ENCODE measurements at regions of chr17 and their contacts with region 1.

Region 1: DNA sequence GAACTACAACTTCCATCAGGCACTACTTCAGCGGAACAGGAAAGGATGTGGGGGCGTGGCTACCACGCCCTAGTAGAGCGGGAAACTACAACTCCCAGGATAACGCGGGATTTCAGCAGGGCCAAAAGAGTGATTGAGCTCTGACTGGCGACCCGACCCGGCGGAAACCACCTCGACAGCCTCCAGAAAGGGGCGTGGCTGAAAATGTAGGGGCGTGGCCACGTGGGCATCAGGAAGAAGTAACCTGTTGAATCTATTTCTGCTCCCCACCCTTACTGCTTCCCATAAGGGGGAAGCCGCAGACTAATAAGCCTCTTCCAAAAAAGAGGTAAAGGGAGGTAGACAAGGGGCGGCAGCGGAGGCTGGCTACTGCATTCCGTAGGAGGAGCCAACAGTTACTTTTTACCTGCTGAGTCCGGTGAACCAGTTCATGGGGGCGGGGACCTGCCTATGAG is at the start of gene TMEM102:
- DNase-seq: peak; percentile 96 to 99 (median 98)
- ATAC-seq: peak; percentile 81
- H3K4me3 ChIP-seq: peak within 1 kb of the TSS; percentile 70 to 82
- H3K4me3 Mint-ChIP-seq: peak within 1 kb of the TSS; percentile 92
- H3K27ac ChIP-seq: peak within 1 kb of the TSS; percentile 66 to 90
- H3K27ac Mint-ChIP-seq: peak within 1 kb of the TSS; percentile 95
- H3K4me1 ChIP-seq: peaks cover 38% of the 10 kb centered on the region
- H3K4me1 Mint-ChIP-seq: peaks cover 38% of the 10 kb centered on the region
- H3K27me3 ChIP-seq: peaks cover 0 to 4% of the 10 kb centered on the region in 2 experiments
- H3K27me3 Mint-ChIP-seq: peaks cover 12% of the 10 kb centered on the region
- CTCF ChIP-seq: no peak
- total RNA-seq, gene TMEM102: 13.2 to 15.3 TPM

Region 2: GRCh38 chr17:7045909-7046724 is 389.1 kb before region 1 on chr17:
- CTCF ChIA-PET with region 1: no interaction called
- POLR2A ChIA-PET with region 1: interaction called, 4 read pairs
- intact Hi-C with region 1: loop called in 1 of 2 experiments (anchors 5 kb)
- DNase-seq: peak in 6 of 9 experiments; percentile 43 to 88 (median 59)
- ATAC-seq: peak; percentile 34
- H3K4me3 ChIP-seq: peak overlapping the region; percentile 42 to 58
- H3K4me3 Mint-ChIP-seq: peak overlapping the region; percentile 79
- H3K27ac ChIP-seq: peak overlapping the region; percentile 47 to 73
- H3K27ac Mint-ChIP-seq: peak overlapping the region; percentile 88
- H3K4me1 ChIP-seq: peaks cover 35% of the 10 kb centered on the region
- H3K4me1 Mint-ChIP-seq: peaks cover 36% of the 10 kb centered on the region
- H3K27me3 ChIP-seq: no peaks in the 10 kb centered on the region
- H3K27me3 Mint-ChIP-seq: no peaks in the 10 kb centered on the region
- CTCF ChIP-seq: peak; percentile 89

Region 3: DNA sequence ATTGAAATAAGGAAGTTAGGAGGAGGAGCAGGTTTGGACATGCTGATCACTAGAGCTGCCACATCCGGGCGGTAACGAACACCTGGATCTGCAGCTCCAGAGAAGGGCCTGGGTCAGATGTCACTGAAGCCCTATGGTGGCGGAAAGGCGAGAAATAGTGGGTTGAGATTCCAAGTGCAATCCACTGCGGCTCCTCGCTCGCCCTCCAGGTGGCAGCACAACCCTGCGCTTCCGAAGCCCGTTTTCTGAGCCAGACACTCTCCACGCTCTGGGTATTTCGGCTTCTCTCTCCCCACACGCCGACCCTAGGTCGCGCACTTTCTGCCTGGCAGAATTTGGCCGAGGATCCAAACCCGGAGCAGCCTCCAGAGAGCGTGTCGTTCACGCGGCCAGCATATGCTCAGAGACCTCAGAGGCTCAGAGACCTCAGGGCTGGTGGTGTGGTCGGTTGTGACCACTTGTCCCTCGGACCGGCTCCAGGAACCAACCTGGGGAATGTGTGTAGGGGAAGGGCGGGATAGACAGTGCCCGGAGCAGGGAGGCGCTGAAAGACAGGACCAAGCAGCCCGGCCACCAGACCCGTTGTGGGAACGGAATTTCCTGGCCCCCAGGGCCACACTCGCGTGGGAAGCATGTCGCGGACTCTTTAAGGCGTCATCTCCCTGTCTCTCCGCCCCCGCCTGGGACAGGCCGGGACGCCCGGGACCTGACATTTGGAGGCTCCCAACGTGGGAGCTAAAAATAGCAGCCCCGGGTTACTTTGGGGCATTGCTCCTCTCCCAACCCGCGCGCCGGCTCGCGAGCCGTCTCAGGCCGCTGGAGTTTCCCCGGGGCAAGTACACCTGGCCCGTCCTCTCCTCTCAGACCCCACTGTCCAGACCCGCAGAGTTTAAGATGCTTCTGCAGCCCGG is 154.5 kb before region 1 on chr17:
- CTCF ChIA-PET with region 1: interaction called, 6 read pairs
- POLR2A ChIA-PET with region 1: no interaction called
- intact Hi-C with region 1: loop called (anchors 1 to 2 kb)
- DNase-seq: peak; percentile 76 to 92 (median 86)
- ATAC-seq: peak; percentile 88
- H3K4me3 ChIP-seq: peak overlapping the region; percentile 41 to 46
- H3K4me3 Mint-ChIP-seq: peak overlapping the region; percentile 73
- H3K27ac ChIP-seq: no peak overlapping the region
- H3K27ac Mint-ChIP-seq: no peak overlapping the region
- H3K4me1 ChIP-seq: peaks cover 25% of the 10 kb centered on the region
- H3K4me1 Mint-ChIP-seq: peaks cover 16% of the 10 kb centered on the region
- H3K27me3 ChIP-seq: peaks cover 0 to 26% of the 10 kb centered on the region in 2 experiments
- H3K27me3 Mint-ChIP-seq: peaks cover 9% of the 10 kb centered on the region
- CTCF ChIP-seq: peak; percentile 84

Region 4: GRCh38 chr17:7383742-7384488 is 51.3 kb before region 1 on chr17:
- CTCF ChIA-PET with region 1: interaction called, 8 read pairs
- POLR2A ChIA-PET with region 1: interaction called, 19 read pairs
- intact Hi-C with region 1: loop called (anchors 1 kb)
- DNase-seq: peak; percentile 60 to 91 (median 80)
- ATAC-seq: peak; percentile 94
- H3K4me3 ChIP-seq: peak overlapping the region; percentile 66 to 75
- H3K4me3 Mint-ChIP-seq: peak overlapping the region; percentile 88
- H3K27ac ChIP-seq: peak overlapping the region; percentile 80 to 92
- H3K27ac Mint-ChIP-seq: peak overlapping the region; percentile 96
- H3K4me1 ChIP-seq: peaks cover 21% of the 10 kb centered on the region
- H3K4me1 Mint-ChIP-seq: peaks cover 8% of the 10 kb centered on the region
- H3K27me3 ChIP-seq: peaks cover 12 to 14% of the 10 kb centered on the region in 2 experiments
- H3K27me3 Mint-ChIP-seq: peaks cover 29% of the 10 kb centered on the region
- CTCF ChIP-seq: no peak

Region 5: GRCh38 chr17:7477392-7478275 is 42.4 kb after region 1 on chr17:
- CTCF ChIA-PET with region 1: interaction called, 34 read pairs
- POLR2A ChIA-PET with region 1: interaction called, 47 read pairs
- intact Hi-C with region 1: loop called in 1 of 2 experiments (anchors 1 kb)
- DNase-seq: peak in 6 of 9 experiments; percentile 30 to 85 (median 66)
- ATAC-seq: peak; percentile 46
- H3K4me3 ChIP-seq: peak overlapping the region; percentile 68 to 78
- H3K4me3 Mint-ChIP-seq: peak overlapping the region; percentile 99
- H3K27ac ChIP-seq: peak overlapping the region; percentile 67 to 91
- H3K27ac Mint-ChIP-seq: peak overlapping the region; percentile 99
- H3K4me1 ChIP-seq: peaks cover 33% of the 10 kb centered on the region
- H3K4me1 Mint-ChIP-seq: peaks cover 68% of the 10 kb centered on the region
- H3K27me3 ChIP-seq: no peaks in the 10 kb centered on the region
- H3K27me3 Mint-ChIP-seq: no peaks in the 10 kb centered on the region
- CTCF ChIP-seq: no peak

Region 6: DNA sequence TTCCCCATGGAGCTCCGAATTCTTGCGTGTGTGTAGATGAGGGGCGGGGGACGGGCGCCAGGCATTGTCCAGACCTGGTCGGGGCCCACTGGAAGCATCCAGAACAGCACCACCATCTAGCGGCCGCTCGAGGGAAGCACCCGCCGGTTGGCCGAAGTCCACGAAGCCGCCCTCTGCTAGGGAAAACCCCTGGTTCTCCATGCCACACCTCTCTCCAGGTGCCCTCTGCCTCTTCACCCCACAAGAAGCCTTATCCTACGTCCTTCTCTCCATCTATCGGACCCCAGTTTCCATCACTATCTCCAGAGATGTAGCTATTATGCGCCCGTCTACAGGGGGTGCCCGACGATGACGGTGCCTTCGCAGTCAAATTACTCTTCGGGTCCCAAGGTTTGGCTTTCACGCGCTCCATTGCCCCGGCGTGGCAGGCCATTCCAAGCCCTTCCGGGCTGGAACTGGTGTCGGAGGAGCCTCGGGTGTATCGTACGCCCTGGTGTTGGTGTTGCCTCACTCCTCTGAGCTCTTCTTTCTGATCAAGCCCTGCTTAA is 125.9 kb after region 1 on chr17:
- CTCF ChIA-PET with region 1: interaction called, 44 read pairs
- POLR2A ChIA-PET with region 1: interaction called, 13 read pairs
- intact Hi-C with region 1: loop called (anchors 1 kb)
- DNase-seq: peak; percentile 67 to 89 (median 81)
- ATAC-seq: peak; percentile 68
- H3K4me3 ChIP-seq: peak overlapping the region; percentile 50 to 95
- H3K4me3 Mint-ChIP-seq: peak overlapping the region; percentile 94
- H3K27ac ChIP-seq: peak overlapping the region; percentile 91 to 97
- H3K27ac Mint-ChIP-seq: peak overlapping the region; percentile 99
- H3K4me1 ChIP-seq: peaks cover 49% of the 10 kb centered on the region
- H3K4me1 Mint-ChIP-seq: peaks cover 50% of the 10 kb centered on the region
- H3K27me3 ChIP-seq: no peaks in the 10 kb centered on the region
- H3K27me3 Mint-ChIP-seq: no peaks in the 10 kb centered on the region
- CTCF ChIP-seq: peak; percentile 85

Region 7: GRCh38 chr17:7740481-7741001 is 305.3 kb after region 1 on chr17:
- CTCF ChIA-PET with region 1: no interaction called
- POLR2A ChIA-PET with region 1: no interaction called
- intact Hi-C with region 1: no loop called
- DNase-seq: no peak
- ATAC-seq: no peak
- H3K4me3 ChIP-seq: no peak overlapping the region
- H3K4me3 Mint-ChIP-seq: no peak overlapping the region
- H3K27ac ChIP-seq: no peak overlapping the region
- H3K27ac Mint-ChIP-seq: no peak overlapping the region
- H3K4me1 ChIP-seq: no peaks in the 10 kb centered on the region
- H3K4me1 Mint-ChIP-seq: no peaks in the 10 kb centered on the region
- H3K27me3 ChIP-seq: peaks cover 0 to 6% of the 10 kb centered on the region in 2 experiments
- H3K27me3 Mint-ChIP-seq: peaks cover 28% of the 10 kb centered on the region
- CTCF ChIP-seq: no peak